ENCODE measurements at regions of chr5 and their contacts with region 1.

Region 1: DNA sequence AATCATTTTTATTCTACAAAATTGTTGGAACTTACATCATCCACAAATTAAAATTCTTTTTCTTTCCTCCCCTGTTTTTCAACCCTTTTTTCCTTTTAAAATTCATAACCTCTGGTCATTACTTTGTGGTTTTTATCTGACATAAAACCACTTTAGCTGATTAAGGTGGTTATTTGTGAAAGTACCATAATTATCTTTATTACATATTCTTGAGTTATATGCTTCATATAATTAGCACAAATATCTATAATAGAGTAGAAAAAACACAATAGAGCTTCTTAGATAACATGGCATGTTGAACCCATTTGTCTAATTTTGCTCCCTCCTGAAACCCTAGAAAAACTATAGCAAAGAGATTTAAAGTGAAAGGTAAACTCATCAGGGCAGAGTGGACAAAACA is 22.9 kb upstream of the PPIC start:
- DNase-seq: no peak
- ATAC-seq: no peak
- H3K4me3 ChIP-seq: no peak overlapping the region
- H3K27ac ChIP-seq: no peak overlapping the region
- H3K4me1 ChIP-seq: no peaks in the 10 kb centered on the region
- H3K27me3 ChIP-seq: no peaks in the 10 kb centered on the region
- CTCF ChIP-seq: no peak

Region 2: GRCh38 chr5:122835681-122836080 is 223.8 kb before region 1 on chr5:
- intact Hi-C with region 1: loop called (anchors 10 kb)
- DNase-seq: no peak
- ATAC-seq: no peak
- H3K4me3 ChIP-seq: no peak overlapping the region
- H3K27ac ChIP-seq: no peak overlapping the region
- H3K4me1 ChIP-seq: no peaks in the 10 kb centered on the region
- H3K27me3 ChIP-seq: no peaks in the 10 kb centered on the region
- CTCF ChIP-seq: no peak

Region 3: DNA sequence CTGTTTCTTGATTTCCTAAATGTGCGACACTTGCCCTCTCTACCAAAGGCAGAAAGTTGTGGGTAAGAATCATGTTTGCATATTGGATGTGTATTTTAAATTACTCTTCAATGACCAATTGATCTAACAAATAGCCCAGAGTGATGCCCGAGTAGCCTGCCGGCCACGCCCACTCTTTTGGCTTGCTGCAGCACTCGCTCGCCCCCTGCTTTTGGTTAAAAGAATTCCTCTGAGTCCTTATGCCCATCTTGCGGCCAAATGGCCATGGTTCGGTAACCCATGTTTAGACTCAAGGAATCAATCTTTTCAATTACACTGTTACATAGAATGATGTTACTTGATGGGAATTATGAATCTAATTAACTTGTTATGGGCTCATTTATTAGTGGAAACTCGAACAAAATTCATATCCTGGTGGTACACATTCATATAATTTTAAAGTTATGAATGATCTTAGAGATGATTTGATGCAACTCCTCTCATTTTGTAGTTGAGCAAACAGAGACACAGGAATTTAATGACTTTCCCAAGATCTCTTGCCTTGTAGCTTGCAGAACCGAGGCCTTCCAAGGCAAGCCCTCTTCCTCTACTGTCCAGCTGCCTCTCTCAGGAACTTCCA is 59.4 kb before region 1 on chr5:
- intact Hi-C with region 1: no loop called
- DNase-seq: peak; percentile 64
- ATAC-seq: peak; percentile 64
- H3K4me3 ChIP-seq: no peak overlapping the region
- H3K27ac ChIP-seq: no peak overlapping the region
- H3K4me1 ChIP-seq: no peaks in the 10 kb centered on the region
- H3K27me3 ChIP-seq: no peaks in the 10 kb centered on the region
- CTCF ChIP-seq: peak; percentile 35